ENCODE measurements at regions of chr5 and their contacts with region 1.

Region 1: DNA sequence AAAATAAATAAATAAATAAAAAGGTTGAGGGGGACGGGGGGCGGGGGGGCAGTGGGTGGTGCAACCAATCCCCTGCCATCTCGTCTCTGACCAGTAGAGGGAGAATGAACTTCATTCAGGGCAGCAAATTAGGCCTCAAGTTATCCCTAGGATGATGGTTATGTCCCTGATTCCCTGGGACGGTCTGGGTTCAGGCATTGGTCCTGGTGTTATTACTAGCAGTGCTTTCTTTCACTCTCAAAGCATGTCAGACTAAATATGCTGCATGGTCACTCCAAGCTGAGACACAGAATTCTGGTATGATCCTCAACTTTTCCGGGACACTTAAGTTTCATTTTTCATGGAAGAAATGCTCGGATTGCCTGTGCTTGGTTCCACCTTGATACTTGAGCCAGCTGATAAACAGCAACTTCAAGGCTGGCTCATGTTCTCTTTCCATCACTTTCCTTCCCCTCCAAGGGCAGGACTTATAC is 59.4 kb downstream of the DAP start:
- DNase-seq: peak; percentile 81
- ATAC-seq: no peak
- H3K4me3 ChIP-seq: peak overlapping the region; percentile 24; the same call in 1 of the 2 replicates
- H3K27ac ChIP-seq: peak overlapping the region; percentile 93
- H3K4me1 ChIP-seq: peaks cover 60% of the 10 kb centered on the region
- H3K27me3 ChIP-seq: no peaks in the 10 kb centered on the region
- CTCF ChIP-seq: peak; percentile 74

Region 2: GRCh38 chr5:10724799-10725507 is 23.4 kb after region 1 on chr5:
- CTCF ChIA-PET with region 1: interaction called, 6 read pairs
- POLR2A ChIA-PET with region 1: interaction called, 4 read pairs
- intact Hi-C with region 1: loop called (anchors 1 kb)
- DNase-seq: peak; percentile 100
- ATAC-seq: peak; percentile 84
- H3K4me3 ChIP-seq: peak overlapping the region; percentile 24
- H3K27ac ChIP-seq: peak overlapping the region; percentile 95
- H3K4me1 ChIP-seq: peaks cover 66% of the 10 kb centered on the region
- H3K27me3 ChIP-seq: no peaks in the 10 kb centered on the region
- CTCF ChIP-seq: peak; percentile 88

Region 3: GRCh38 chr5:10735569-10736276 is 34.1 kb after region 1 on chr5:
- CTCF ChIA-PET with region 1: no interaction called
- POLR2A ChIA-PET with region 1: no interaction called
- intact Hi-C with region 1: loop called (anchors 5 kb)
- DNase-seq: no peak
- ATAC-seq: no peak
- H3K4me3 ChIP-seq: no peak overlapping the region
- H3K27ac ChIP-seq: no peak overlapping the region
- H3K4me1 ChIP-seq: peaks cover 42% of the 10 kb centered on the region
- H3K27me3 ChIP-seq: no peaks in the 10 kb centered on the region
- CTCF ChIP-seq: no peak

Region 4: GRCh38 chr5:10746711-10747110 is 45.1 kb after region 1 on chr5:
- CTCF ChIA-PET with region 1: no interaction called
- POLR2A ChIA-PET with region 1: no interaction called
- intact Hi-C with region 1: no loop called
- DNase-seq: no peak
- ATAC-seq: no peak
- H3K4me3 ChIP-seq: no peak overlapping the region
- H3K27ac ChIP-seq: no peak overlapping the region
- H3K4me1 ChIP-seq: no peaks in the 10 kb centered on the region
- H3K27me3 ChIP-seq: no peaks in the 10 kb centered on the region
- CTCF ChIP-seq: no peak

Region 5: GRCh38 chr5:11302663-11303062 is 601.1 kb after region 1 on chr5:
- CTCF ChIA-PET with region 1: no interaction called
- POLR2A ChIA-PET with region 1: no interaction called
- intact Hi-C with region 1: no loop called
- DNase-seq: no peak
- ATAC-seq: no peak
- H3K4me3 ChIP-seq: no peak overlapping the region
- H3K27ac ChIP-seq: no peak overlapping the region
- H3K4me1 ChIP-seq: peaks cover 8% of the 10 kb centered on the region
- H3K27me3 ChIP-seq: peaks cover 30% of the 10 kb centered on the region
- CTCF ChIP-seq: no peak